ENCODE measurements at regions of chrX and their contacts with region 1.

Region 1: DNA sequence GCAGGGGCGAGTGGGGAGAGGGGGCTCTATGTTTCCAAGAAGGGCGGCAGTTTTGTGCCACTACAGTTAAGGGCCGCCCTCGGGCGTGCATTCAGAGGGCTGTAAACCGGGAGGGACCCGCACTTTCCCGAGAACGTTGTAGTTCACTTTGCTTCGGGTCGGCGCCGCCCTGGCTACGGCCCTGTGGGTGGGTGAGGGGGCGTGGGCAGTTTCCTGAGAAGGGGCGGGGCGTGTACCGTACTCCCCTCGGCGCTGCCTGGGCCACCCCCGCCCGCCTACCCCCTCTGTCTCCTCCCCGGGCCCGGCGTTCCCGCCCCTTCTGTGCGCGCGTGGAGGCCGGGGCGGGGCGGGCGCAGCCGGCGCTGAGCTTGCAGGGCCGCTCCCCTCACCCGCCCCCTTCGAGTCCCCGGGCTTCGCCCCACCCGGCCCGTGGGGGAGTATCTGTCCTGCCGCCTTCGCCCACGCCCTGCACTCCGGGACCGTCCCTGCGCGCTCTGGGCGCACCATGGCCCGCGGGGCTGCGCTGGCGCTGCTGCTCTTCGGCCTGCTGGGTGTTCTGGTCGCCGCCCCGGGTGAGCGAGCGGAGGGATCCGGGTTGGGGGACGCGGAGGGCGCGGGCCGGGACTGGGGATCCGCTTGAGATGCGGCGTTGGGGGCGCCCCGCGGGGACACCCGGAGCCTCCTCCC is at the start of gene CD99:
- DNase-seq: peak; percentile 91
- H3K4me3 Mint-ChIP-seq: peak within 1 kb of the TSS; percentile 86
- H3K27ac Mint-ChIP-seq: peak within 1 kb of the TSS; percentile 96
- H3K4me1 Mint-ChIP-seq: peaks cover 25% of the 10 kb centered on the region
- H3K27me3 Mint-ChIP-seq: no peaks in the 10 kb centered on the region
- total RNA-seq, gene CD99: 282 to 283 TPM

Region 2: DNA sequence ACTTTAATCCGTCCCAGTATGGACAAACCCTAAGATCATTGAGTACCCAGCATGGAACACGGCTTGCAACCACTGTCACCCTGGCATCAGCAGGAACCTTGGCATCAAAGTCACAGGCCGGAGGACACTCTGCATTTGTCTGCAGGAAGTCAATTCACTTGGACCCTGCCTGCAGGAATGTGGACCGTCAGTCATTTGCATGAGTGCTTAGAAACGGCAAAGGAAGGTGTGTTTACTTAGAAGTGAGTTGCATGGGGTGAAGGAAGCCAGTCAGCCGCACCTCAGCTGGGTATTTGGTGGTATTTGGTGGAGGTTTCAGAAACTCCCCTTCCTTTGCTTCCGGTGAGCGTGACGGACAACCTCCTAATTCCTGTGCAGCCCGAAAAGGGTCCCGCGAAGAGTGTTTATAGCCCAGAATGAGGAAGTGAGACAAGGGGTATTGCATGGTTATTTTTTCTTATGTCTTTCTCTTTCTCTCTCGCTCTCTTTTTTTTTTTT is 1169.5 kb before region 1 on chrX:
- CTCF ChIA-PET with region 1: no interaction called
- POLR2A ChIA-PET with region 1: no interaction called
- intact Hi-C with region 1: loop called (anchors 10 kb)
- DNase-seq: peak; percentile 85
- H3K4me3 Mint-ChIP-seq: peak overlapping the region; percentile 73
- H3K27ac Mint-ChIP-seq: peak overlapping the region; percentile 97
- H3K4me1 Mint-ChIP-seq: peaks cover 52% of the 10 kb centered on the region
- H3K27me3 Mint-ChIP-seq: no peaks in the 10 kb centered on the region

Region 3: DNA sequence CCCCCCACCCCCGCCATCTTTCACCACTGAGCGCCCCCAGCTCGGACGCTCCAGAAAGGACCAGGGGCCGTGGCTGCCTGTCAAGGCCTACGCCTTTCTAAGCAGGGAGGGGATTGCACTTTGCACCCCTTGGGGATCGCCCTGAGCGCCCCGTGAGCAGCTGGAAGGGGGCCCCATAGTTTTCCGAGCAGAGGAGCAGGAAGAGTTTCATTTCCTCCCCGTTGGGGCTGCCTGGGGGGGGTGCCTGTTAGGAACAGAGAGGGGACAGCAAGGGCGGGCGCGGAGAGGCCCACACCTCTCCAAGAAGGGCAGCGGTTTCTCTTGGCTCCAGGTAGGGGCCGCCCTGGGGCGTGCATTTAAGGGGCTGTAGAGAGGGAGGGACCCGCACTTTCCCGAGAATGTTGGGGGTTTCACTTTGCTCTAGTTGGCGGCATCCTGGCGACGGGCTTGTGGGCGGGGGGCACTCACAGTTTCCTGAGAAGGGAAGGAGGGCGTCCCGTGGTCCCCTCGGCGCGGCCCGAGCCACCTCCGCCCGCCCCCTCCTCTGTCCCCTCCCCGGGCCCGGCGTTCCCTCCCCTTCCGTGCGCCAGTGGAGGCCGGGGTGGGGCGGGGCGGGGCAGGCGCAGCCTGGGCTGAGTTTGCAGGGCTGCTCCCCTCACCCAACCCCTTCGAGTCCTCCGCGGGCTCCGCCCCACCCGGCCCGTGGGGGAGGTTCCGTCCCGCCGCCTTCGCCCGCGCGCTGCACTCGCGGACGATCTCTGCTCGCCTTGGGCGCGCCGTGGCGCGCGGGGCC is 82.2 kb before region 1 on chrX:
- CTCF ChIA-PET with region 1: no interaction called
- POLR2A ChIA-PET with region 1: no interaction called
- intact Hi-C with region 1: loop called (anchors 2 kb)
- DNase-seq: peak; percentile 92
- H3K4me3 Mint-ChIP-seq: peak overlapping the region; percentile 82
- H3K27ac Mint-ChIP-seq: peak overlapping the region; percentile 87
- H3K4me1 Mint-ChIP-seq: peaks cover 45% of the 10 kb centered on the region
- H3K27me3 Mint-ChIP-seq: no peaks in the 10 kb centered on the region

Region 4: DNA sequence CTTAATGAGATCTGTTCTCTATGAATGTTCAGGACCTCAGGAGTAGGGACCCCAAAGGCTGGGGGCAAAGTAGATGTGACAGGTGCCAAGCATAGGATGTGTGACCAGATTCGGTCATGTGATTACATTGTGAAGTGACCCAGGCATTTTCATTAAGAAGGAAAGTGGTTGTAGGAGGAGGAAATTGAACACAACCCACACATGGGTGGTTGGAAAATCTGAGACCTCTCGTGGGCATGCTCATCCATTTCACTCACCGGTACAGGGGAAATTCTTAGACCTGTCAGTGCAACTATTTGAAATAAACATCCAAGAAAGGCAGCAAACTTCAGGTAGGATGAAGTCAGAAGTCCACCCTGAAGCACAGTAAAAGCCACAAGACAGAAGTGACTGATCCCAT is 43.4 kb before region 1 on chrX:
- CTCF ChIA-PET with region 1: no interaction called
- POLR2A ChIA-PET with region 1: no interaction called
- intact Hi-C with region 1: loop called (anchors 5 kb)
- DNase-seq: peak; percentile 56
- H3K4me3 Mint-ChIP-seq: no peak overlapping the region
- H3K27ac Mint-ChIP-seq: peak overlapping the region; percentile 40
- H3K4me1 Mint-ChIP-seq: peaks cover 18% of the 10 kb centered on the region
- H3K27me3 Mint-ChIP-seq: no peaks in the 10 kb centered on the region